ENCODE measurements at regions of chr22 and their contacts with region 1.

Region 1: DNA sequence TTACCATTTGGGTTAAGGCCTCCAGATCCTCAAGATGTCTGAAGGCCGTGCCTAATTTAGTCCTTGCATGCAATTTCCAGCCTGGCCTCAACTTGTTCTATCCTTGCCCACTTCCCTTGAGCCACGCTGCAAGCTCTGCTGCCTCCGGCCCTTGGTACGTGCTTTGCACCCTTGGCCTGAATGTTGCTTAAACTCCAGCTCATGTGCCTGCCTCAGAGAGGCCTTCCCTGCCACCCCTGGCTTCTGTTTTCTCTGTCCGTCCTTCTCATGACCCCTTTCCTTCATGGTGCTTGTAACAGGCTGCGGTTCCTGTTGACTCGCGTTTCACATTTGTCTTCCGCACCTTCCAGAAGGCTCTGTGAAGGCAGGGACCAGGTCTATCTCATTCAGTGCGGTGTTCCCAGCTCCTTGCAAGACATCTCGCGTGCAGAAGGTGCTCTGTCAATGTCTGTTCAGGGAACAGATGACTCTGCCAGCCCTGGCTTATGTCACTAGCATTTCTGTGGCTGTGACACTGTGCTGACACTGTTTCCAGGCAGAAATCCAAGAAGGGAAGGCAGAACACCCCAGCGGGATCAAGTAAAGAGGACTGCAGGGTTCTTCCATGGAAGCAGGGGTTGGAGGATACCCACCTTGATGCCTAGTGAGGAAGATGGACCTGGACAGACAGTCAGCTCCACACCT is 61.8 kb downstream of the FBLN1 start:
- DNase-seq: no peak
- CTCF ChIP-seq: no peak

Region 2: DNA sequence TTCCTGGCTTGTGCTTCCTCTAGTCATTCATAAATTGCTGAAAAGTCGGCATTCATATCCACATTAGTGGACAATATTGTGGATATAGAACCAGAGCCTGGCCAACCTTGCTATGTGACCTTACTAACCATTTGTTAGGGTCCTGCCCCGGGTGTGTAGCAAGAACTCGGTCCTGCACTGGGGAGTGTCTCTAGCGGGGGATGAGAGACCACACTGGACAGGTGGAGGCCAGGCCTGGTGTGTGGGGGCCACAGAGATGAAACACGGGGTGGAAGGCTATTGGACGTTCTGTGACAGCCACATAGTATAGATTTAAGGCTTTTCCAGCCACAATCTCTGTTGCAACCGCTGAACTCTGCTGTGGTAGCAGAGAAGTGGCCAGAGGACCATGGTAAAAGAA is 19.0 kb before region 1 on chr22:
- CTCF ChIA-PET with region 1: no interaction called
- POLR2A ChIA-PET with region 1: no interaction called
- DNase-seq: no peak
- CTCF ChIP-seq: no peak

Region 3: DNA sequence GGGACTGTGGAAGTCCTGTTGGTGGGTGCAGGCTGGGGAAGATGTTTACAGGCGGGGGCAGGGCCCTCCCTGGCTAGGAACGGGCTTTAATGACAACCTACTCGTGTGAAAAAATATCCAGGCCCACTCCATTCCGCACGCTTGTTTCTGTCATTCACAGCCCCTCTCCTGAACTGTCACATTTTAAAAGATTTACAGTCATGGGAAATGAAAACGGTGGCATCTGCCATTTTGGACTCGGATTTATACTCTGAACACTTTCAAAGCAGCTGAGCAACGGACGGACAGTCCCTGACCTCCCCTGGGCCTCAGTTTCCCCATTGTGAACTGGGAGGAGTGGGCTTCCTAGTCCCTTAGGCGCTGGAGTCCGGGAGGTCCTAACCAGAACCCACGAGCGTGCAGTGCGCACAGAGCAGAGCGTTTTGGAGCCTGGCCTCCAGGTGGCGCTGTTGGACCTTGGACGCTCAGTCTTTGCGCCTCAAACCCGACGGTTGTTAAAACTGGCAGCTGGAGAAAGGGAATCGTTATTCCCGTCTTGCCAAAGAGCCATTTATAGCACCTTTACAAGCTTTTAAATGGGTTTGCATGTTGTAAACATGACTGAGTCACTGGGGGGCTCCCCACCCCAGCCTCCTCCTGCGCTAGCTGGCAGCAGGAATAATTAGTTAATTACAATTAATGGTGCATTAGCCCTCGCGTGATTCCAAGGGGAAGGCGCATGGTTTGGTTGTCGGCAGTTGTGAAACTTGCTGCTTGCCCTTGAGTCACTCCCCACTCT is 13.4 kb after region 1 on chr22:
- CTCF ChIA-PET with region 1: interaction called, 21 read pairs
- POLR2A ChIA-PET with region 1: no interaction called
- DNase-seq: peak; percentile 83
- CTCF ChIP-seq: peak; percentile 98

Measured in GM10248 (cell line).